ENCODE measurements at regions of chr20 and their contacts with region 1.

Region 1: DNA sequence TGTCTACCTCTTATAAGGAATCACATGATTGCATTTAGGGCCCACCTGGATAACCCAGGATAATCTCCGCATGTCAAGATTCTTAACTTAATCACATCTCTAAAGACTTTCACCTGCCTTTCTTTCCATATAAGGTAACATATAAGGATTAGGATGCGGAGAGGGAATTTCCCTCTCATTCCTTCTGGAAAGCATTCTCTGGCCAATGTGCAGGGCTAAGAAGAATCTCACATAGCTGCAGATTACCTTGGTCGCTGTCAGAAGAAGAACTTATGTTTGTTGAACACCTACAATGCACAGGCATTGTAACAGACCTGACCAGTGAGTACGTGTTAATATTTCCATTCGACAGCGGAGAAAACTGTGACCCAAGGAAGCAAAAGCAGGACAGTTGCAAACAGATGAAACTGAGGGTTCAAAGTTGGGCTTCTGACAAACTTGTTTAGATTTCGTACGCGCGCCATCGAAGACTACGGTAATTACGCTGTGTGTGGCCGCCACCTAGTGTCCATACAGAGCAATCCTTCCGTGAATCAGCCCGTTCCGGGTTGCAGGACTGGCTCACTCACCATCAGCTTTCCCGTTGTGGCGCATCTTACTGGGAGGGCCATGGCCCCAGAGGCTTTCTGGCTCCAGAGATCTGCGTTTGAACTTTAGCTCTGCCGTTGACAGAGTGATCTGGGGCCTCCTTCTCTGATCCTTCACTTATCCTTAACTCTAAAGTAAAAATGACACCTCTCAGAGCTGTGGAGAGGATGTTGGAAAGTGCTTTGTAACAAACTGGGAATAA is 9.5 kb downstream of the C20orf202 start:
- DNase-seq: peak; percentile 66
- ATAC-seq: peak; percentile 99
- H3K4me3 ChIP-seq: peak overlapping the region in 1 of 2 experiments; percentile 28; a peak in 1 of 4 replicates
- H3K27ac ChIP-seq: no peak overlapping the region
- H3K4me1 ChIP-seq: peaks cover 6 to 19% of the 10 kb centered on the region in 2 experiments; a peak in 3 of 4 replicates
- H3K27me3 ChIP-seq: peaks cover 11% of the 10 kb centered on the region
- CTCF ChIP-seq: peak; percentile 71 to 79 (median 77)
- POLR2A ChIP-seq: no peak
- RAD21 ChIP-seq: peak; percentile 81

Region 2: DNA sequence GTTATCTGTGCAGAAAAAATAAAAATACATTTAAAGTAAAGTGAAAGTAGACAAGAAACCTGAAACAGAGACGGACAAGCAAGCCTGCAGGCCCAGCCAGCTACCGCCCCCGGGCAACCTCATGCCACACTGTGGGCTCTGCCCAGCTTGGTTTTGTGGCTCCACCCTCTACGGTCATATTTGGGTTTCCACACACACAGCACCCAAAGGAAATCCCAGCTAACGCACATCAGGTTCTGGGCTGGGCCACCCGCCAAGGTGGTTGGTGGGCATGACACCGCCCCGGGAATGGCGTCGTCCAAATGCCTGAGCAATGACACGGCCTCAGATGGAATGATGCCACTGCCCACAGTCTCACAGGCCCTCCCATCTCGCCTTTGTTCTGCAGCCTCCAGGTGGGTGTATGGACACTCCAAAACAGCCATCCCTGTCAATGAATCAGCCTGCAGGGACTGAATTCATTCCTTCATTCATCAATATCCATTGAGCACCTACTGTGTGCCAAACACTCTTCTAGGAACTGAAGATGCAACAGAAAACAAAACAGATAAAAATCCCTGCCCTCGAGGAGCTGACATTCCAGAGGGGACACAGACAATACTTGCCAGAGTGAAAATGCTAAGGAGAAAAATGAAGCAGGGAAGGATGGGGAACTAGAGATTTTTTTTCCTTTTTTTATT is 356.3 kb before region 1 on chr20:
- CTCF ChIA-PET with region 1: no interaction called
- POLR2A ChIA-PET with region 1: no interaction called
- RAD21 ChIA-PET with region 1: no interaction called
- intact Hi-C with region 1: no loop called
- DNase-seq: peak; percentile 92
- ATAC-seq: peak; percentile 96
- H3K4me3 ChIP-seq: peak overlapping the region in 1 of 2 experiments; percentile 18; a peak in 1 of 4 replicates
- H3K27ac ChIP-seq: peak overlapping the region; percentile 1
- H3K4me1 ChIP-seq: peaks cover 24 to 61% of the 10 kb centered on the region in 2 experiments
- H3K27me3 ChIP-seq: no peaks in the 10 kb centered on the region
- CTCF ChIP-seq: no peak
- POLR2A ChIP-seq: no peak
- RAD21 ChIP-seq: 0 out of 2 replicates have a peak, but pooled peaks have one; percentile 9

Region 3: GRCh38 chr20:1118336-1119127 is 94.3 kb before region 1 on chr20 and contains the start of gene PSMF1:
- CTCF ChIA-PET with region 1: no interaction called
- POLR2A ChIA-PET with region 1: no interaction called
- RAD21 ChIA-PET with region 1: no interaction called
- intact Hi-C with region 1: loop called (anchors 10 kb)
- DNase-seq: peak; percentile 87
- ATAC-seq: peak; percentile 93
- H3K4me3 ChIP-seq: peak within 1 kb of the TSS; percentile 97 to 98
- H3K27ac ChIP-seq: peak within 1 kb of the TSS; percentile 69
- H3K4me1 ChIP-seq: peaks cover 14 to 19% of the 10 kb centered on the region in 2 experiments
- H3K27me3 ChIP-seq: no peaks in the 10 kb centered on the region
- CTCF ChIP-seq: no peak
- POLR2A ChIP-seq: peak; percentile 95
- RAD21 ChIP-seq: no peak
- total RNA-seq, gene PSMF1: 153 TPM